Aorta (tissue), 5 donors: ENCODE measurements at regions of chr2 and their contacts with region 1.

Region 1: DNA sequence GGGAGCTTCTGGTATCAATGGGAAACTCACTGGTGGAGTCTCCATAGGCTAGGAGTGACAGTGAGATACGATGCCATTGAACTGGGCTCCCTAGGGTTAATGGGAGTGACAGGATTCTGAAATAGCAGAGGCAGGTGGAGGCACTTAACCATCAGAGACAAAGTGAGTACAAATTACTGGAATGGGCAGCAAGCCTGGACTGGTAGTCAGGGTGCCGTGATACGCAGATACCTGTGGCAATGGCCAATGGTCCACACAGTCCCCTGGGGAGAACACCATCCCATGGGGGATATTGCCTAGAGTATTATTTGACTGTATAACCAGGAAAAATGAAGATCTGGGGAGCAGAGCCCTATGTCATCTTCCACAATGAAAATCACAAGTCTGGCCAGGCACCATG is 17.3 kb downstream of the CHCHD5 start:
- DNase-seq: no peak
- ATAC-seq: no peak
- H3K4me3 ChIP-seq: no peak overlapping the region
- H3K27ac ChIP-seq: no peak overlapping the region
- H3K4me1 ChIP-seq: no peaks in the 10 kb centered on the region
- H3K27me3 ChIP-seq: no peaks in the 10 kb centered on the region

Region 2: GRCh38 chr2:112547333-112547732 is 54.4 kb before region 1 on chr2:
- intact Hi-C with region 1: no loop called
- DNase-seq: no peak
- ATAC-seq: no peak
- H3K4me3 ChIP-seq: no peak overlapping the region
- H3K27ac ChIP-seq: no peak overlapping the region
- H3K4me1 ChIP-seq: peaks cover 0 to 5% of the 10 kb centered on the region in 2 donors
- H3K27me3 ChIP-seq: no peaks in the 10 kb centered on the region

Region 3: GRCh38 chr2:112692496-112692911 is 90.8 kb after region 1 on chr2:
- intact Hi-C with region 1: loop called in 1 of 2 experiments (anchors 5 kb)
- DNase-seq: peak in 1 of 2 donors; percentile 72
- ATAC-seq: peak; percentile 55
- H3K4me3 ChIP-seq: no peak overlapping the region
- H3K27ac ChIP-seq: no peak overlapping the region
- H3K4me1 ChIP-seq: no peaks in the 10 kb centered on the region
- H3K27me3 ChIP-seq: no peaks in the 10 kb centered on the region

Region 4: GRCh38 chr2:112726497-112727190 is 124.9 kb after region 1 on chr2:
- intact Hi-C with region 1: loop called (anchors 1 to 2 kb)
- DNase-seq: peak; percentile 94 to 95
- ATAC-seq: peak; percentile 89
- H3K4me3 ChIP-seq: no peak overlapping the region
- H3K27ac ChIP-seq: no peak overlapping the region
- H3K4me1 ChIP-seq: no peaks in the 10 kb centered on the region
- H3K27me3 ChIP-seq: no peaks in the 10 kb centered on the region